GM18951 (cell line): ENCODE measurements at regions of chr20 and their contacts with region 1.

Region 1: GRCh38 chr20:24992487-24993205 is at the start of gene APMAP:
- POLR2A ChIP-seq: peak; percentile 96

Region 2: DNA sequence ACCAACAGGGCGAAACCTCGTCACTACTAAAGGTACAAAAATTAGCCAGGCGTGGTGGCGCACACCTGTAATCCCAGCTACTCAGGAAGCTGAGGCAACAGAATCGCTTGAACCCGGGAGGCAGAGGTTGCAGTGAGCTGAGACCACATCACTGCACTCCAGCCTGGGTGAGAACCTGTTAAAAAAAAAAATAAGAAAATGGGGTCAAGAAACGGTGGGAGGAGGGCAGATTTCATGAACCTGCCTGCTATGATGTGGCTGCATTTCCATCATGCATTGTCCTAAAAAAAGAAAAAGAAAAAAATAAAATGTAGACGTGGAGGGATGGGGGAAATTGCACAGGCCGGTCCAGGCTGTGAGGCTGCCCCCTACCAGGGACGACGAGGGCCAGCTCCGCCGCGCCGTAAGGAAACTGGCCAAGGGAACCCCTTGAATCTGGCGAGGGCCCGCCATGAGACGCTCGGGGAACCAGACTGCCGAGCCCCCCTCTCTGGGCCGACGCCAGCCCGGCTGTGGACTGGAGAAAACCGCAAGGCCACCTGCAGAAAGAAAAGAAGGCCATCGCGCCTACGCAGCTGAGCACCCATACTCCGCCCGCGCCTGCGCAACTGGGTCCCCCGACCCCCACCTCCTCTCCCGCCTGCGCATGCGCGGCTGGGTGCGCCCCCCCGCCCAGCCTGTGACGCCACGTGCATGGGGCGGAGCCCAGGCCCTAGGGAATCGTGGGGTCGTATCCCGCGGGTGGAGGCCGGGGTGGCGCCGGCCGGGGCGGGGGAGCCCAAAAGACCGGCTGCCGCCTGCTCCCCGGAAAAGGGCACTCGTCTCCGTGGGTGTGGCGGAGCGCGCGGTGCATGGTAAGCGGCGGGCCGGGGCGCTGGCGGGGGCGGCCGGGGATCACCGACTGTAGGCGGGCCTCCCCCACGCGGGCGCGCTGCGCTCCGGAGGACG is 202.6 kb after region 1 on chr20 and contains the start of gene ENTPD6:
- in situ Hi-C with region 1: loop called (anchors 25 kb)
- POLR2A ChIP-seq: peak; percentile 78

Region 3: DNA sequence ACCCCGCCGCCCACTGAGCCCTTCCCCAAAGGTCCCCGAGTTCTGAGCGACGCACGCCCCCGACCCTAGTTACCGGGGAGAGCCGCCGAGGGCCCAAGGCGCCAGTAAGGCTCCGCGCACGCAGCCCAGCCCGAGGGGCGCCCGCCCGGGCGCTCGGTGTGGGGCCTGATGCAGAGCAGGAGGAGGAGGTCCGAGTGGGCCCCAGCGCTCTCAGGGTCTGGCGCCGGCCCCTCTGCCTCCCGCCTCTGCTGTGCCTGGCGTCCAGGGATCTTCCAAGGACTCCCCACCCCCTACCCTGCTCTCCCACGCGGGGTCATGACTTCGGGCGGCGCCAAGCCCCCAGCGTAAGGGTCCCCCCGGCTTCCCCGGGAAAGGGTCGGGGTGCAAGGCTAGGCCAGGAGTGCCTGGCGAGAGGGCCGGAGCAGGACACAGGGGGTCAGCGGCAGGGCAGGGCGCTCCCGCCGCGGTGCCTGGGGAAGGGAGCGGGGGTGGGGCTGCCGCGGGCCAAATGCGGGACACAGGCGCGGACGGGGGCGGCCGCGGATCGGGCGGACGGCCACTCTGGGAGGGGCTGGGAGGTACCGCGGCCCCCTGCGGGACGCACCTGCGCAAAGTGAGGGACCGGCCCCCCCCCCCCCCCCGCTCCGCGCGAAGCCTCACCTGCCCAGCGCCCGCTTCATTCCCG is 397.3 kb after region 1 on chr20:
- in situ Hi-C with region 1: loop called (anchors 5 kb)
- POLR2A ChIP-seq: no peak

Region 4: GRCh38 chr20:25407311-25408169 is 414.9 kb after region 1 on chr20 and contains the start of gene GINS1:
- in situ Hi-C with region 1: no loop called
- POLR2A ChIP-seq: peak; percentile 84